ENCODE measurements at regions of chr5 and their contacts with region 1.

Region 1: DNA sequence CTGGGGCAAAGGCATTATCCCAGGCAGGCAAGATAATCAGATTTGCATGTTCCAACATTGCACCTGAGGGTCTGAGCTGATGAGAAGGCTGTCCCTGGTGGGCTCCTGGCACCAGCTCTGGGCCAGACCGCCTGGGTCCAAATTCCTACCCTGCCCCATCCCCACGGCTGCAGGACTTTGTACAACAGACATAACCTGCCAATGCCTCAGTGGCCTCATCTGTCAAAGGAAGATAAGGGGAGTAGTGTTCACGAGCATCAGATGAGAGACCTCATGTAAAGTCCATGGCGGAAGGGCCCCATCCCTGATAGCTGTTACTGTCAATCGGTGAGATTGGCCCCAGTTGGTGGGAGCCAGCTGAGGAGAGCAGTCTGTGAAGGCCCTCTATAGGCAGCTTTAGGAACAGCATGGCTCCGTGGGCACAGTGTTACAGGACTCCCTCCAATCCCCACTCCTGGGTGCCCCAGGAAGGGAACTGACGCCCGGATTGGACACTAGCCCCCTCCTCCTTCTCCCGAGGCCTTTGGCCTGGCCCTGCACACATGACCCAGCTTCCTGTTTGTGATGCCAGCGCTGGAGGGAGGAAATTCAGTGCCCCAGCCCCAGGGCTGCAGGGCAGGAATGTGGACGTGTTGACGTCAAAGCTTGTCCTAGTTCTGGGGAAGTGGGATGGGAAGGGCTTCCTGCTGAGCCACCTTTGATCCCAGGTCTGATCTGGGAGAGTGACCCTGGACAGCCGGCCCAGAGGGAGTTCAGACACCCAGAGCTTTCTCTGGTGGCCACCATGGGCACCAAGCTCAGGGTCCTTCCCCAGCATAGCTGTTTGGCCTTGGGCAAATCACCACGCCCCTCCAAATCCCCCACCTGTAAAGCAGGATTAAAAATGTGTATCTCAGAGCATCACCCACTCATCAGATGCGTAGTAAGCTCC is 56.2 kb downstream of the DUSP1 start:
- DNase-seq: peak; percentile 45
- H3K4me3 ChIP-seq: no peak overlapping the region
- H3K27ac ChIP-seq: peak overlapping the region; percentile 19
- H3K4me1 ChIP-seq: peaks cover 9% of the 10 kb centered on the region
- H3K27me3 ChIP-seq: no peaks in the 10 kb centered on the region
- CTCF ChIP-seq: peak; percentile 90 to 93

Region 2: GRCh38 chr5:172740428-172741201 is 25.9 kb after region 1 on chr5:
- CTCF ChIA-PET with region 1: interaction called, 14 read pairs
- dilution Hi-C with region 1: no loop called
- in situ Hi-C with region 1: no loop called
- intact Hi-C with region 1: no loop called
- DNase-seq: peak; percentile 92
- H3K4me3 ChIP-seq: no peak overlapping the region
- H3K27ac ChIP-seq: peak overlapping the region; percentile 87
- H3K4me1 ChIP-seq: peaks cover 13% of the 10 kb centered on the region
- H3K27me3 ChIP-seq: no peaks in the 10 kb centered on the region
- CTCF ChIP-seq: no peak

Region 3: DNA sequence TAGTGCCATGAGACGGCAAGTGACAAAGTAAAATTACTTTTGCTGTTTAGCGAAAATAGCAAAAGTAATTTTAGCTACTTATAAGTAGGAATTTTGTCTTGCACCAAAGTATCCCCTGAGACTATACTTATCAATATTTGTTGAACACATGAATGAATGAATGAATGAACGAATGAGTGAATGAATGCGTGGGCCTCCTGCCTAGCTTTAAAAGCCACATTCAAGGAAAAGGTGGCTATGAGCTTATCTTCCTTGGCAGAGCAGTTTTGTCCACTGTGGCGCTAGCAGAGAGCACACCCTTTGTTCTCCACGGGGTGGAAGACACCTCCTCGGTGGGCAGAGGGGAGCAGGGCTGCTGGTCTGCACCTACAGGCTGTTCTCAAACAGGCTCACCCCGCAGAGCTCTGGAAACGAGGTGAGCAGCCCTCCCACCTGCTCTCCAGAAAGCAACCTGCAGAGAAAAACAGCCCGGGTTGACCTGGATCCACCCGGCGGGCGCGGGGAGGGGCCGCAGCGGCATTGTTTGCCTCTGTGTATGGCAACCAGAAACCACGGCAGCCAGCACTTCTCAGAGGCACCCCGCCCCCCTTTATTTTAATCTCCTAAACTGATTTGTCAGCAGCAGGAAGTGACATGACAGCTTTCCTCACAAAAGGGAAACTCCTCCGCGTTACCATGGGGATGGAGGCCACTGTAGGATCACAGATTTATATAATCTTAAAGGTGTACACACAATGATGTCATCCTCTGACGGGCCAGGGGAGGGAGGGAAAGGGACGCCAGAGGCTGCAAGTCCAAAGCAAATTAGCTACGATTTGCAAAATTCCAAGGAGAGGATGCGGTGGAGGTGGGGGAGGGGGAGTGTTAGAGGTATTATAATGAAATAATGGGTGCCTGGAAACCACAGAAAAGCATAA is 50.4 kb after region 1 on chr5:
- CTCF ChIA-PET with region 1: no interaction called
- dilution Hi-C with region 1: no loop called
- in situ Hi-C with region 1: no loop called
- intact Hi-C with region 1: loop called (anchors 1 kb)
- DNase-seq: peak; percentile 99
- H3K4me3 ChIP-seq: peak overlapping the region; percentile 16 to 52 (median 38)
- H3K27ac ChIP-seq: peak overlapping the region; percentile 95
- H3K4me1 ChIP-seq: peaks cover 42% of the 10 kb centered on the region
- H3K27me3 ChIP-seq: no peaks in the 10 kb centered on the region
- CTCF ChIP-seq: no peak

Region 4: DNA sequence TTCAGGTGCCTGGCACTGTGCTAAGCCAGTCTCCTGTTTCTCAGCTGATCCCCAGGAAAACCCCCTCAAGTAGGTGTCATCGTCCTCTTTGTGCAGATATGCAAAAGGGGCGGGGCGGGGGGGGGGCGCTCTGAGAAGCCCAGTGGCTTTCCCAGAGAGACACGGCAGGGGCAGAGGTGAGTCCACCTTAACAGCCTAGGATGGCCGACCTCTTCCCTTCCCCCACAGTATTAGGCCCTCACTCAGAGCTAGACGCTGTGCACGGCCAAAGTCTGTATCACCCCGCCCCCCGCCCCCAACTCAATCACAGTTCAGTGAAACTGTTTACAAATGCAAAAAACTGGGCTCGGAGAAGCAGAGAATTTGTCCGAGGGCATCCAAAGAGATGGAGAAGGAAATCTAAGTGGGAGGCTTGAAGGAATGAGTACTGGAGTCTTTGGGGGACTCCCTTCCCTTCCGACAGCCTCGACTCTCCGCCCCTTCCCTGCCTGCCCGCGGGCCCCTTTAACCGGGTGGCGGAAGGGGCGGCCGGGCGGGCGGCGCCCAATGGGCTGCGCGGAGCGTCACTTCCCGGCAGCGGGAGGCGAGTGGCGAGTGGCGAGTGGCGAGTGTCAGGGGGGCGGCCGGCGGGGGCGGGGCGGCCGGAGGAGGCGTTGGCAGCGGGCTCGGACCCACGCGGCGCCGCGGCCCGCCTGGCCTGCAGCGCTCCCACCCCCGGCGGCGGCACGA is 119.1 kb after region 1 on chr5 and contains the start of gene ERGIC1:
- CTCF ChIA-PET with region 1: no interaction called
- dilution Hi-C with region 1: no loop called
- in situ Hi-C with region 1: no loop called
- intact Hi-C with region 1: loop called (anchors 2 kb)
- DNase-seq: peak; percentile 78
- H3K4me3 ChIP-seq: peak within 1 kb of the TSS; percentile 73 to 87 (median 82)
- H3K27ac ChIP-seq: peak within 1 kb of the TSS; percentile 72
- H3K4me1 ChIP-seq: peaks cover 8% of the 10 kb centered on the region
- H3K27me3 ChIP-seq: no peaks in the 10 kb centered on the region
- CTCF ChIP-seq: no peak
- total RNA-seq, gene ERGIC1: 58.8 to 98.6 TPM

Region 5: DNA sequence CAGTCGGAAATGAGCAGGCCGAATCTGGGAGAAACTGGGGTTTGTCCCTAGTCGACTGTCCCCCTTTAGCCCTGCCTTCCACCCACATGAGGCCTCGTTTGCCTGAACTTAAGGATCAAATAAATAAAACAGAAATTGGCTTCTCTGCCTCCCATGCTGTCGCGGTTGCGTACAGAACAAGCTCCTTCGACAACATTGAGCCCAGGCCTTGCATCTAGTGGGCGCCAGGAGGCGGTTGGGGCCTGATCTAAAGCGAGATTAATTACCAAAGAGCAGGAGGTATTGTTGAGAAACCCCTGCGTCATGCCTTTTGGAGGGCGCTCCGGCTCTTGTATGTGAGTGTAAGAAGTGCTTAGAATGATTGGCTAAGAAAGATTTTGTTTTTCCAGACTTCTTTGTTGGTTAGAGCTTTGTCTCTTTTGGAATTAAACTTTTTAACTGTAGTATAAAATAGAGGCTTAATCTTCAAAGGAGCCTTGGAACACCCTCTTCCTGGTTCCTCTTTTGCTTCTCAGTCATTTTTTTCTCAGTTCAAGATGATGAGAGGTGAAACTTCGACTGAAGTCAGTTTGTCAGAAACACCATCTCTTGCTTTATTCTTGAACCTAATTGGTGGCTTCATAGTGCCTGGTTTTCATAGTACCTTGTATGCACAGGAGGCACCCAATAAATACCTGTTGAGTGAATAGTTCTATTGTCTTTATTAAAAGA is 269.6 kb after region 1 on chr5:
- CTCF ChIA-PET with region 1: interaction called, 21 read pairs
- dilution Hi-C with region 1: no loop called
- in situ Hi-C with region 1: no loop called
- intact Hi-C with region 1: no loop called
- DNase-seq: peak; percentile 85
- H3K4me3 ChIP-seq: peak overlapping the region; percentile 58 to 92 (median 78)
- H3K27ac ChIP-seq: peak overlapping the region; percentile 91
- H3K4me1 ChIP-seq: peaks cover 11% of the 10 kb centered on the region
- H3K27me3 ChIP-seq: no peaks in the 10 kb centered on the region
- CTCF ChIP-seq: peak; percentile 43 to 72

Region 6: GRCh38 chr5:173144200-173145176 is 429.7 kb after region 1 on chr5 and contains the start of gene BNIP1:
- CTCF ChIA-PET with region 1: no interaction called
- dilution Hi-C with region 1: no loop called
- in situ Hi-C with region 1: no loop called
- intact Hi-C with region 1: loop called (anchors 5 kb)
- DNase-seq: peak; percentile 93
- H3K4me3 ChIP-seq: peak within 1 kb of the TSS; percentile 79 to 89 (median 84)
- H3K27ac ChIP-seq: peak within 1 kb of the TSS; percentile 94
- H3K4me1 ChIP-seq: peaks cover 3% of the 10 kb centered on the region
- H3K27me3 ChIP-seq: no peaks in the 10 kb centered on the region
- CTCF ChIP-seq: peak; percentile 91 to 99
- total RNA-seq, gene BNIP1: 10.8 to 12.4 TPM

Region 7: GRCh38 chr5:173581408-173582215 is 866.9 kb after region 1 on chr5:
- CTCF ChIA-PET with region 1: no interaction called
- dilution Hi-C with region 1: no loop called
- in situ Hi-C with region 1: loop called in 1 of 2 experiments (anchors 25 kb)
- intact Hi-C with region 1: no loop called
- DNase-seq: no peak
- H3K4me3 ChIP-seq: no peak overlapping the region
- H3K27ac ChIP-seq: no peak overlapping the region
- H3K4me1 ChIP-seq: no peaks in the 10 kb centered on the region
- H3K27me3 ChIP-seq: peaks cover 2% of the 10 kb centered on the region
- CTCF ChIP-seq: peak; percentile 59 to 80